Left lung (tissue), 14 donors: ENCODE measurements at regions of chr20 and their contacts with region 1.

Region 1: DNA sequence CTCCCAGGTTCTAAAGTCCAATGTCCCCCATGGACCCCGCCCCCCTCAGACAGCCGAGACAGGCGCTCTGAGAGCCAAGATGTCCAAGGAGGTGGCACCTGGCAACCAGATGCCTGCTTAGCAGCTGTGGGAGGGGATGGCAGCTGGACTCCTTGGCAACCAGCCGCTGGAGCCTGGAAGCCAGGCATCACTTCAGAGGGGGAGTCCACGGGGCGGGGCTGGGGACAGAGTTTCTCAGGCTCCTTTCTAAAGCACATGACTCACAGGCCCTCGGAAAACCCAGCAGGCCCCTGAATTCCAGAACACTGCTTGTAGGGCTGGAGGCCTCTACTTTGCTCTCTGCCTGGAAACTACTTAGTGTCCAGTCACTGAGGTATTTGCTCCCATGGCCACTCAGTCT is 51.5 kb downstream of the PREX1 start:
- DNase-seq: peak in 1 of 4 donors; percentile 80
- ATAC-seq: no peak
- H3K4me3 ChIP-seq: no peak overlapping the region
- H3K27ac ChIP-seq: peak overlapping the region; percentile 33 to 87
- H3K4me1 ChIP-seq: peaks cover 6 to 99% of the 10 kb centered on the region in 2 donors
- H3K27me3 ChIP-seq: peaks cover 0 to 11% of the 10 kb centered on the region in 2 donors
- CTCF ChIP-seq: no peak

Region 2: GRCh38 chr20:48585059-48585822 is 191.1 kb before region 1 on chr20:
- intact Hi-C with region 1: no loop called
- DNase-seq: no peak
- ATAC-seq: no peak
- H3K4me3 ChIP-seq: no peak overlapping the region
- H3K27ac ChIP-seq: no peak overlapping the region
- H3K4me1 ChIP-seq: no peaks in the 10 kb centered on the region
- H3K27me3 ChIP-seq: peaks cover 0 to 69% of the 10 kb centered on the region in 2 donors
- CTCF ChIP-seq: no peak

Region 3: DNA sequence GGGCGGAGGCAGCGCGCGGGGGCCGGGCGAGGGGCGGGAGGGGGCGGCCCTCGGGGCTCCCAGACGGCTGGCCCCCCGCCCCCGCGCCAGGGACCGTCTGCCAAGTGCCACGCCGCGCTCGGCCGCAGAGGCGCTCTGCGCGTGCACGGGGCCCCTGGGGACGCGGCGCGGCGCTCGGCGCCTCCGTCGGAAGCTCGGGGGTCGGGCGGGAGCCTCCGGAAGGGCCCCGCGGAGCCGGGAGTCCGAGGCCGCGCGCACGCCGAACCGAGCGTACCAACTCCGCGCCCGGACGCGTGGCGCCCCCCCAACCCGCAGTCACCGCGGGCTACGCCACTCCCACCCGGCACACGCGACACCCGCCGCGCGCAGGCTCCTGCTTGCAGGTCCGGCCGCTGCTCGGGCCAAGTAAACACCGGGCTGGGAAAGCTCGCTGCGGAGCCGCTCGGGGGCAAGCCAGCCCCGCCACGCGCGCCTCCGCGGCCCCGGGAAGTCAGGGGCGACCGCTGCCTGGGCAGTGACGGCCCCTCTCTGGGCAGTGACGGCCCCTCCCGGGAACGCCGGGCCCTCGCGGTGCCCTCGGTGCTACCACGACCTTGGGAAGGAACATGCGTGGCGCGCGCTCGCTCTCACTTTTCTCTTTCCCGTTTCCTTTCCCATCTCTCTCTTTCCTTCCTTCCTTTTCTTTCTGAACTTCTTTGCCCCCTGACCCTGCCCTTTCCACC is 51.9 kb after region 1 on chr20:
- intact Hi-C with region 1: loop called in 1 of 2 experiments (anchors 10 kb)
- DNase-seq: peak; percentile 65 to 95 (median 76)
- ATAC-seq: peak; percentile 69
- H3K4me3 ChIP-seq: peak overlapping the region; percentile 37 to 67
- H3K27ac ChIP-seq: peak overlapping the region; percentile 44 to 97
- H3K4me1 ChIP-seq: peaks cover 12 to 74% of the 10 kb centered on the region in 2 donors
- H3K27me3 ChIP-seq: peaks cover 14 to 65% of the 10 kb centered on the region in 2 donors
- CTCF ChIP-seq: no peak